ENCODE measurements at regions of chr15 and their contacts with region 1.

Region 1: DNA sequence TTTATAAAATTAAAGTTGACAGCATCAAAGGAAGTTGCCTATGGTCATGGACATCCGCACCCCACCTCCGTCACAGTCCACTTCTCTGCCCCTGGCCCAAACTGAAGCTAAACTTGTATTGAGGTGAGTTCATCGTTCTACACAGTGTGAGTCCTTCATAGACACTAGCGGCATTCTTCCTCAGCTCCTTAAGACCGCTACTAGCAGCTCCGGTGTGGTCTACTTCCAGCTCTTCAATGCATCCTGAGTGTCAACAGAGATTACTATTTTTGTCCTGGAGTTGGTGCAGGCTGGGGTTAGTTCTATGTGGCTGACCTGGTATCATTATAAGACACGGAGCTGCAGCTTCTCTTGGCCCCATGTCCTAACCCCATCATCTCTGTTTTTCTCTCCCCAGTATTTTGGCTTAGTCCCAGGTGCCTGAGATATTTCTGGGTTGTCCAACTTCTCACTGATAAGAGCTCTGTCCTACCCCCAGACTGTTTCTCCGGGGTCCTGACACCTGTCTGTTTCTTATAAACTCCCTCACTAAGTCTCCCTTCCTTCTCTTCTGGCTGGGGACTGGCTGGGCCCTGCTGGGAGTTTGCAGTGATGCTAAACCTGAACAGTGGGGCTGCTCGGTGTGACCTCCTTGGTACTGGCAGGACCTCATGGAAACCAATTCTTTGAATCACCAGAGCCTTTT is 169.2 kb upstream of the ATP10A start:
- DNase-seq: no peak

Region 2: GRCh38 chr15:25515633-25516032 is 516.7 kb before region 1 on chr15:
- intact Hi-C with region 1: no loop called
- DNase-seq: no peak

Region 3: DNA sequence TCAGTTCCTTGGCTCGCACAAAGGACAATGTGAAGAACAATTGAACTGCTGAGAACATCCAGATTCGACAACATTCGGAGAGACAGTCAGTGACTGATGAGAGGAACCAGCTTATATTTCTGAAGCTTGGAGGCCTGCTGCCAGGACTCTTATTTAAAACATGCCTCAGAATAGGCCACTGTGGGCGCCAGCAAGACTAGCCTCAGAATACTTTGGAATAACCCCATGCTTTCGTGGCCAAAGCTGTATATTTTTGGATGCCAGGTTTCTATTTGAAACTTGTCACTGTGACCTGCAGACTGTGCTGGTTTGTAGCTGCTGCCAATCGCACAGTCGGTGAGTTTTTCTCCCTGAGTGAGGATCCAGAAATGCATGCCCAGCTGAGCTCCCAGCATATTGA is 463.6 kb before region 1 on chr15:
- intact Hi-C with region 1: no loop called
- DNase-seq: no peak

Region 4: DNA sequence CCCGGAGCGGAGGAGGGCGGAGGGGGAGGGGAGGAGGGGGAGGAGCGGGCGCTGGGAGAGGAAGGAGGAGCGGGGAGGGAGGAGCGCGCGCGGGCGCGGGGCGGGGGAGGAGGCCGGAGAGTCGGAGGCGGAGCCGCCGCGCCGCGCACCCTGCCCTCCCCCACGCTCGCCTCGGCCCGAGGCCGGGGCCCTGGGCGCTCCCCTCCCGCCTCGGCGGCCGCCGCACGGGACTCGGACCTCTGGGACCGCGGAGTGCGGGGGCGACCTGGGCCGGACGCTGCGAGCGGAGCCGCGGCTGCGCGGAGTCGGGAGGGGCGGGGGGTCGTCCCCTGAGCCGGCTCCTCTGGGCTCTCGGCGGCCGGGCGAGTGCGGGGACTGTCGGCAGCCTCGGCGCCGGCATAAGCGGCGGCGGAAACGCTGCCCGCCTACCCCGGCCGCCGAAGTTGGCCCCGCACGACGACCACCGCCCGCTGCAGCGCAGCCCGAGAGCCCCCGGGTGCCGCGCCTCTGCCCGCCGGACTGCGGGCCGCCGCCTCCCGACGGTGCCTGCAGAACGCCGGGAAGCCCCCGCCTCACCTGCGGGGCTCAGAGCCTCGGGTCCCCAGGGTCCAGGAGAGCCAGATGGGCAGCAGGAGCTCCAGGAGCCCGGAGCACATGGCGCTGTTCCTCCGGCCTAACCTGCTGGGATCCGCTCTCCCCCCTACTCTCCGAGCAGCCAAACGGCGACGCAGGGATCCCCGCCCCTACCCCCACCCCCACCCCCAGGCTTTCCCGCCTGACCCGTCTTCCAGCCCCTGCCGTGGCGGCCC is 741.0 kb after region 1 on chr15:
- intact Hi-C with region 1: loop called in 1 of 2 experiments (anchors 5 kb)
- DNase-seq: no peak

Measured in posterior vena cava (tissue), 2 donors.